GM10248 (cell line): ENCODE measurements at regions of chr6 and their contacts with region 1.

Region 1: DNA sequence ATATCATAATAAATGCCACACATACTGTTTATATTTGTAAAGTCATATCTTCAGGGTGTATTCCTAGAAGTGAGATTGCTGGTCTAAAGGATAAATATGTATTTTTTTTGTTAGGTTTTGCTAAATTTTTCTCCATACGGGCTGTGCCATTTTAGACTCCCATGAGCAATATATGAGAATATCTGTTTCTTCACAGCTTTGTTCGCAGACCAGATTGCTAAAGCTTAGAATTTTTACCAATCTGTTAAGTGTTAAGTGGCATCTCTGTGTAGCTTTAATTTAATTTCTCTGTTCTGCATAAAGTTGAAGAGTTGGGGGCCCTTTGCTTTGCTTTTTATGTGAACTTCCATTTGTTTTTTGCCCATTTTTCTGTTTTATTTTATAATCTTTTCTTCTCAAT is 32.3 kb upstream of the NUS1 start:
- DNase-seq: no peak
- CTCF ChIP-seq: no peak

Region 2: DNA sequence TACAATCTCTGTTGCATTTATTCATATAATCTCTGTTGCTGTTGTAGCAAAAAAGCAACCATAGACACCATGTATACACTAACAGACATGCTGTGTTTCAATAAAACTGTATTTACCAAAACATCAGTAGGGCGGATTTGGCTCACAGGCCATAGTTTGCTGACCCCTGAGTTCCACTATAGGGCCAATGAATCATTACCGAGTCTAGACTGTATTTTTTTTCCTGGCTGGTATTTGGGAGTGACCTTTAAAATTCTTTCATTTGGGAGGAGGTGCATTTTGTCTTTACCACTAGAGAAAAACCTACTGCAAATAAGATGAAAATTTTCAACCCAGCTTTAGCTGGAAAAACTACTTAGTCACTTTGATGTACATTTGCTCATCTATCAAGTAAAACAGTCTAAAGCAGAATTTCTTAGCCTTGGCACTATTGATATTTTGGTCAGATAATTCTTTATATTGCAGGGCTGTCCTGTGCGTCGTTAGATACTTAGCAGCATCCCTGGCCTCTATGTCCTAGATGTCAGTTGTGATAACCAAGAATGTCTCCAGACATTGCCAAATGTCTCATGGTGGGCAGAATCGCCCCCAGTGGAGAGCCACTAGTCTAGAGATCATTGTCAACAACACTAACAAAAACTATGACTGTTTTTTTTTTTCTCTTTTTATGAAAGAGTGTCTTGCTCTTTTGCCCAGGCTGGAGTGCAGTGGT is 121.0 kb before region 1 on chr6:
- CTCF ChIA-PET with region 1: no interaction called
- POLR2A ChIA-PET with region 1: no interaction called
- DNase-seq: no peak
- CTCF ChIP-seq: no peak

Region 3: GRCh38 chr6:117568831-117569410 is 74.1 kb before region 1 on chr6:
- CTCF ChIA-PET with region 1: no interaction called
- POLR2A ChIA-PET with region 1: no interaction called
- DNase-seq: no peak
- CTCF ChIP-seq: no peak

Region 4: DNA sequence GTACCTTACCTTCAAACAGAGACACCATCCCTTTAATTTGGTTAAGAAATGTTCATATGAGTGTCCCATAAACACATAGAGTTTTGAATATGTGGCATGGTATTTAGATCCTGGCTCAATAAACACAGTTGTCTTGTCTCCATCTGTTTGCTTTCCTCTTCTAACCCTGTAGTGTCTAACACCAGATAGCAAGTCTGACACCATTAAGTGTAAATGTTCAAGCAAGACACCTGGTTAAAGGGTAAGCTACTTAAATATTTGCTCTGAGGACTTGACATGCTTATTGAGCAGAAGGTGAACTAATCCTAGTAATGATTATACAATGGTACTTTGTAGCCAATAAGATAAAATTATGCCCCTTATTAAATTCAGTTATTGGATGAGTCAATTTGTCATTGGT is 13.9 kb before region 1 on chr6:
- CTCF ChIA-PET with region 1: interaction called, 11 read pairs
- POLR2A ChIA-PET with region 1: no interaction called
- DNase-seq: no peak
- CTCF ChIP-seq: no peak